GM12878 (cell line): ENCODE measurements at regions of chr1 and their contacts with region 1.

Region 1: GRCh38 chr1:168234846-168235547 is 9.2 kb downstream of the SFT2D2 start:
- DNase-seq: no peak
- ATAC-seq: peak; percentile 98
- H3K4me3 ChIP-seq: no peak overlapping the region
- H3K27ac ChIP-seq: no peak overlapping the region
- H3K4me1 ChIP-seq: no peaks in the 10 kb centered on the region; the same call in 1 of the 2 replicates
- H3K27me3 ChIP-seq: no peaks in the 10 kb centered on the region
- CTCF ChIP-seq: peak; percentile 63 to 80 (median 79)
- EP300 ChIP-seq: no peak
- POLR2A ChIP-seq: no peak
- RAD21 ChIP-seq: peak; percentile 69

Region 2: GRCh38 chr1:168178638-168179437 is 56.2 kb before region 1 on chr1 and contains the start of gene TIPRL:
- CTCF ChIA-PET with region 1: interaction called, 13 read pairs
- POLR2A ChIA-PET with region 1: interaction called, 3 read pairs
- RAD21 ChIA-PET with region 1: no interaction called
- SMC1A ChIA-PET with region 1: no interaction called
- in situ Hi-C with region 1: no loop called
- intact Hi-C with region 1: no loop called
- DNase-seq: peak; percentile 89
- ATAC-seq: peak; percentile 93
- H3K4me3 ChIP-seq: peak within 1 kb of the TSS; percentile 91
- H3K27ac ChIP-seq: peak within 1 kb of the TSS; percentile 95
- H3K4me1 ChIP-seq: no peaks in the 10 kb centered on the region; the same call in 1 of the 2 replicates
- H3K27me3 ChIP-seq: no peaks in the 10 kb centered on the region
- CTCF ChIP-seq: peak; percentile 36 to 54 (median 51); a peak in 5 of 6 replicates
- EP300 ChIP-seq: no peak
- POLR2A ChIP-seq: peak; percentile 90
- RAD21 ChIP-seq: peak; percentile 25; the same call in 1 of the 2 replicates
- polyA plus RNA-seq, gene TIPRL: 51.9 to 57.9 TPM

Region 3: DNA sequence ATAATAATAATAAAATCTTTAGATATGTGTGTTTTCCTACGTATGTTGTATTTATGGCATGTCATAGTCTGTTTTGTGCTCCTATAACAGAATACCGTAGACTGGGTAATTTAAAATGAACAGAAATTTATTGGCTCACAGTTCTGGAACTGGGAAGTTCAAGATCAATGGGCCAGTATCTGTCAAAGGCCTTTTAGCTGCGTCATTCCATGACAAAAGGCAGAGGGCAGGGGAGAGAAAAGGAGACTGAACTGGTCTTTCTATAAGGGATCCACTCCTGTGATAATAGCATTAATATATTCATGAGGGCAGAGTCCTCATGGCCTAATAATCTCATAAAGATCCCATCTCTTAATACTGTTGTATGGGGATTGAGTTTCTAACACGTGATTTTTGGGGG is 16.3 kb before region 1 on chr1:
- CTCF ChIA-PET with region 1: interaction called, 10 read pairs
- POLR2A ChIA-PET with region 1: no interaction called
- RAD21 ChIA-PET with region 1: no interaction called
- SMC1A ChIA-PET with region 1: no interaction called
- in situ Hi-C with region 1: no loop called
- intact Hi-C with region 1: no loop called
- DNase-seq: no peak
- ATAC-seq: no peak
- H3K4me3 ChIP-seq: no peak overlapping the region
- H3K27ac ChIP-seq: no peak overlapping the region
- H3K4me1 ChIP-seq: no peaks in the 10 kb centered on the region
- H3K27me3 ChIP-seq: no peaks in the 10 kb centered on the region
- CTCF ChIP-seq: no peak
- EP300 ChIP-seq: no peak
- POLR2A ChIP-seq: no peak
- RAD21 ChIP-seq: no peak

Region 4: GRCh38 chr1:168252204-168252733 is 17.3 kb after region 1 on chr1:
- CTCF ChIA-PET with region 1: interaction called, 17 read pairs
- POLR2A ChIA-PET with region 1: interaction called, 4 read pairs
- RAD21 ChIA-PET with region 1: no interaction called
- SMC1A ChIA-PET with region 1: interaction called, 3 read pairs
- in situ Hi-C with region 1: no loop called
- intact Hi-C with region 1: no loop called
- DNase-seq: no peak
- ATAC-seq: no peak
- H3K4me3 ChIP-seq: no peak overlapping the region
- H3K27ac ChIP-seq: no peak overlapping the region
- H3K4me1 ChIP-seq: no peaks in the 10 kb centered on the region
- H3K27me3 ChIP-seq: no peaks in the 10 kb centered on the region
- CTCF ChIP-seq: no peak
- EP300 ChIP-seq: no peak
- POLR2A ChIP-seq: no peak
- RAD21 ChIP-seq: no peak

Region 5: GRCh38 chr1:168328731-168329399 is 93.9 kb after region 1 on chr1:
- CTCF ChIA-PET with region 1: interaction called, 11 read pairs
- POLR2A ChIA-PET with region 1: no interaction called
- RAD21 ChIA-PET with region 1: no interaction called
- SMC1A ChIA-PET with region 1: no interaction called
- in situ Hi-C with region 1: no loop called
- intact Hi-C with region 1: no loop called
- DNase-seq: no peak
- ATAC-seq: no peak
- H3K4me3 ChIP-seq: no peak overlapping the region
- H3K27ac ChIP-seq: no peak overlapping the region
- H3K4me1 ChIP-seq: no peaks in the 10 kb centered on the region
- H3K27me3 ChIP-seq: no peaks in the 10 kb centered on the region
- CTCF ChIP-seq: no peak
- EP300 ChIP-seq: no peak
- POLR2A ChIP-seq: no peak
- RAD21 ChIP-seq: no peak